IMR-90 (cell line): ENCODE measurements at regions of chr3 and their contacts with region 1.

Region 1: GRCh38 chr3:133927540-133928066 is 31.9 kb upstream of the RAB6B start:
- DNase-seq: no peak
- ATAC-seq: peak; percentile 87
- H3K4me3 ChIP-seq: peak overlapping the region; percentile 51
- H3K27ac ChIP-seq: no peak overlapping the region; the same call in 1 of the 2 replicates
- H3K4me1 ChIP-seq: peaks cover under 1% of the 10 kb centered on the region
- H3K27me3 ChIP-seq: no peaks in the 10 kb centered on the region; the same call in 1 of the 2 replicates
- CTCF ChIP-seq: peak; percentile 71
- POLR2A ChIP-seq: no peak
- RAD21 ChIP-seq: peak; percentile 44

Region 2: GRCh38 chr3:133812872-133813271 is 114.7 kb before region 1 on chr3:
- CTCF ChIA-PET with region 1: interaction called, 8 read pairs
- POLR2A ChIA-PET with region 1: no interaction called
- dilution Hi-C with region 1: no loop called
- in situ Hi-C with region 1: loop called (anchors 10 kb)
- intact Hi-C with region 1: no loop called
- DNase-seq: peak; percentile 40
- ATAC-seq: peak; percentile 54
- H3K4me3 ChIP-seq: no peak overlapping the region
- H3K27ac ChIP-seq: no peak overlapping the region
- H3K4me1 ChIP-seq: no peaks in the 10 kb centered on the region
- H3K27me3 ChIP-seq: no peaks in the 10 kb centered on the region
- CTCF ChIP-seq: no peak
- POLR2A ChIP-seq: no peak
- RAD21 ChIP-seq: no peak

Region 3: GRCh38 chr3:134059671-134060560 is 132.3 kb after region 1 on chr3:
- CTCF ChIA-PET with region 1: no interaction called
- POLR2A ChIA-PET with region 1: no interaction called
- dilution Hi-C with region 1: no loop called
- in situ Hi-C with region 1: no loop called
- intact Hi-C with region 1: loop called (anchors 5 kb)
- DNase-seq: peak; percentile 19
- ATAC-seq: no peak
- H3K4me3 ChIP-seq: no peak overlapping the region
- H3K27ac ChIP-seq: no peak overlapping the region
- H3K4me1 ChIP-seq: peaks cover 46% of the 10 kb centered on the region
- H3K27me3 ChIP-seq: no peaks in the 10 kb centered on the region
- CTCF ChIP-seq: 0 out of 2 replicates have a peak, but pooled peaks have one; percentile 14
- POLR2A ChIP-seq: no peak
- RAD21 ChIP-seq: no peak

Region 4: DNA sequence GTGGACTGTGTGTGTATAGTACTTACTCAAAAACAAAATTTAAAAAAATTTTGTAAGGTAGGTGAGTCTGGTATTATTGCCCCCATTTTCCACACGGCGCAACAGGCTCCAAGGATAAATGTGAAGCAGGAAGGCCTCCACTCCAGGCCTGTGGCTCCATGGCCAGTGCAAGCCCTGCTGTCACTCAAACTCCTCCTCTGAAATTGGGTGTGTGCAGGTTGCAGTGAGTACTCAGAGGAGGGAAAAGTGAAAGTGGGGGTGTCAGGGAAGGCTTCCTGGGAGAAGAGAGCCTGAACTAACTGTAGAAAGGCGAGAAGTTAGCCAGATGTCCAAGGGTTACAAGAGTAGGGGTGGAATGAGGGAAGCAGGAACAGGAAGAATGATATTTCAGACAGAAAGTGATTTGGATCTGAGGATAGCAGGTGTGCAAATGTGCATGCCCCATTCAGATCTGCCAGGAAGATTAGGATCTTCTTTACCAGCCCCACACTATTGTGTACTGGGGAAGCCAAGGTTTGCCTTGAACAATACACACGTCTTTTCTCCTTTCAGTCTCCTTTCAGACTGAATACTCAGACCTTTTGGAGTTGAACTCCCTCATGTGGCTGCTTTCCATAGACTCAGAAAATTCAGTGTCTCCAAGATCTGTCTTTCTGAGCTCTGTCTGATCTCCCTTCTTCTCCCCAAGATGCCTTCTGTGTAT is 371.7 kb after region 1 on chr3:
- CTCF ChIA-PET with region 1: no interaction called
- POLR2A ChIA-PET with region 1: no interaction called
- dilution Hi-C with region 1: no loop called
- in situ Hi-C with region 1: loop called (anchors 10 kb)
- intact Hi-C with region 1: loop called (anchors 1 kb)
- DNase-seq: peak; percentile 53
- ATAC-seq: peak; percentile 87
- H3K4me3 ChIP-seq: no peak overlapping the region
- H3K27ac ChIP-seq: no peak overlapping the region
- H3K4me1 ChIP-seq: no peaks in the 10 kb centered on the region
- H3K27me3 ChIP-seq: no peaks in the 10 kb centered on the region
- CTCF ChIP-seq: peak; percentile 49
- POLR2A ChIP-seq: no peak
- RAD21 ChIP-seq: peak; percentile 46

Region 5: GRCh38 chr3:134485718-134486576 is 558.3 kb after region 1 on chr3 and contains the starts of genes ANAPC13 and CEP63:
- CTCF ChIA-PET with region 1: no interaction called
- POLR2A ChIA-PET with region 1: no interaction called
- dilution Hi-C with region 1: no loop called
- in situ Hi-C with region 1: loop called (anchors 10 kb)
- intact Hi-C with region 1: loop called (anchors 10 kb)
- DNase-seq: peak; percentile 99
- ATAC-seq: peak; percentile 86
- H3K4me3 ChIP-seq: peak within 1 kb of the TSS; percentile 54
- H3K27ac ChIP-seq: peak within 1 kb of the TSS; percentile 93
- H3K4me1 ChIP-seq: peaks cover 20% of the 10 kb centered on the region
- H3K27me3 ChIP-seq: no peaks in the 10 kb centered on the region
- CTCF ChIP-seq: no peak
- POLR2A ChIP-seq: peak; percentile 82
- RAD21 ChIP-seq: 0 out of 2 replicates have a peak, but pooled peaks have one; percentile 5
- total RNA-seq, gene ANAPC13: 43.4 and 82.8 TPM in 2 replicates
- total RNA-seq, gene CEP63: 6.5 and 16.1 TPM in 2 replicates